Mucosa of descending colon (tissue), 3 donors: ENCODE measurements at regions of chr19 and their contacts with region 1.

Region 1: GRCh38 chr19:2475702-2476450 is at the start of gene GADD45B:
- DNase-seq: peak; percentile 97 to 99 (median 98)
- ATAC-seq: peak; percentile 83
- H3K4me3 ChIP-seq: peak within 1 kb of the TSS; percentile 63
- H3K4me1 ChIP-seq: peaks cover 36% of the 10 kb centered on the region
- CTCF ChIP-seq: no peak
- total RNA-seq, gene GADD45B: 30.6 to 45.5 (median 35.9) TPM

Region 2: DNA sequence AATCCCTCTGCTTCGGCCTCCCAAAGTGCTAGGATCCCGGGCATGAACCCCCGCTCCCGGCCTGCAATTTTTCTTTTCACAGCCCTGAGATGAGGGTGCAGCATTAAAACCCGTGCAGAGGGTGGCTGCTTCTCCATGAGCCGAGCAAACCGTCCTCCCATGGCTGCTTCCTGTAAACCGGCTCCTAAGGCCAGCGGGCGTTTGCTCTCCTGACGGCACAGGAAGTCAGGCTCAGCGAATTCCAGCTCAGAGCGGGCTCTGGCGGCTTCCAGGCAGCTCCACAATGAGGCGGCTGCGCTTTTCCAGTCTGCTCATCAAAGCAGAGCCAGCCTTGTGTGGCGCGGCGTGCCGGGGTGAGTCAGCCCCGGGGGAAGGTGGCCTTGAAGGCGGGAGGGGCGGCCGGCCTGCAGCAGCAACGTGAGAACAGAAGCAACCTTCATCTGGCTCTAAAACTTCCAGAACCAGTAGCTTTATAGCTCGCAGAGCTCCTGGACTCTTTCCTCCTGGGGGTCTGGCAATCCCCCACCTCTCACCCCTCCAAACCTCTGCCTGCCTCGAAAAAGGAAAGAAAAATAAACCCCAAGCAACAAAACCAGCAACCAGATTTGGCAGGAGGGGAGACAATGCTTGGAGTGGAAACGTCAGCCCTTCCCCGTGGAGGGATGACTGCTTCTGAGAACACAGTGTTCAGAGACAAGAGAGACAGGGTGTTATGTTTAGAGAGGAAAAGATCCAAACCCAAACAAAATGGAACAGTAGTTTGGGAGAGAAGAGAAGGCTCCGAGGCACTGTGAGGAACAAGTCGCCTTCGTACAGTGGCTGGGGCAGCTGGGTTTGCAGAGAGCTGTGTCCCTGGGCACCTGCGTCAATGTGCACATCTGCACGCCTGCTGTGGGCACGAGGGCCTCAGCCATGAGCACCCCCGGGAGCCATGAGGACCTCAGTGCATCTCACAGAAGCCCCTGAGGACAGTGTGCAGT is 67.9 kb after region 1 on chr19:
- intact Hi-C with region 1: loop called (anchors 2 to 5 kb)
- DNase-seq: peak; percentile 85 to 92 (median 89)
- ATAC-seq: peak; percentile 92
- H3K4me3 ChIP-seq: no peak overlapping the region
- H3K4me1 ChIP-seq: peaks cover 26% of the 10 kb centered on the region
- CTCF ChIP-seq: no peak

Region 3: GRCh38 chr19:2610637-2611482 is 135.0 kb after region 1 on chr19:
- intact Hi-C with region 1: loop called (anchors 2 to 5 kb)
- DNase-seq: peak; percentile 92 to 97 (median 97)
- ATAC-seq: peak; percentile 97
- H3K4me3 ChIP-seq: no peak overlapping the region
- H3K4me1 ChIP-seq: peaks cover 11% of the 10 kb centered on the region
- CTCF ChIP-seq: peak; percentile 96